CD4-positive, alpha-beta T cell (primary cell): ENCODE measurements at regions of chr22 and their contacts with region 1.

Region 1: DNA sequence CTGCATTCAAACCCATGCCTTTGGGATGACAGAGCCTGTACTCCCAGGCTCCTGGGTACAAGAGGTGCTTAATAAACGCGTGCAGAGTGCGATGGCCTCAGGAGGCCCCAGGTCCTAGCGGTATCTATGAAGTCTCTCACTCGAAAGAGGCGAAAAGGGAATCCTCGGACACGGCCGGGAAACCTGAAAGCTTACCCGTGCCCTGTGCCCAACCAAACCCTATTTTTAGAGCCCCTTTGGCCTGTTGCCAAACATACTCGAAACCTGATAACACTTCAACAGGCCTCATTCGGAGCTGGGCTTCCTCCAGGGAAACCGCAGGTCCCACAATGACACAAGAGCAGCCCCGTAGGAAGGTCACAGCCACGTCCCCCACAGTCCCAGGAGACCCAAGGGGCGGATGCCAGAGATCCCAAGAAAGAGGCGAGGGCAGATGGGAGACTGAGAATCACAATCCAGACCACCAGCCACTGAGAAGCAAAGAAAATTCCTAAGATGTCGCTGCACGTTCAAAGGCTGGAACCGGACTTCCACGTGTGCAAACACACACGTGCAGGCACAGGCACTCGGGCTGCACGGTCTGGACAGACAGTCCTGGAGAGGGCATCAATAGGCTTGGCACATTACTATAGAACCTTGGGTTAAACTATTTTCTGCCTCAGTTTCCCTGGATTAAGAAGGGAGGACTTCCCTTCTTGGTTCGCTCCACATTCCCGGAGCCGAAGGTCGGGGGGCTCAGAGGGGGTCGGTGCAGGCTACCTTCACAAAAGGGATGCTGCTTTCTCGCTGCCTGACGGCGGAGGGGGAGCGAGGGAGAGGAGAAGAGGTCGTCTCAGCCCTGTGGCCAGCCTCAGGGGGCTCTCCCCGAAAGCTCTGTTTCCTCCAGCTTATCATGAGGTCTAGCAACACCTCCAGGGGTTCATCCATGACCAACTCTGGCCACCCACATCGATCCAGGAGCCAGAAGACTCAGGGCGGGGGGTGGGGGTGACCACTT is 8.2 kb downstream of the PDGFB start:
- DNase-seq: peak in 11 of 14 experiments; percentile 25 to 82 (median 38)
- ATAC-seq: peak; percentile 9
- H3K4me3 ChIP-seq: peak overlapping the region; percentile 12
- H3K4me3 Mint-ChIP-seq: peak overlapping the region; percentile 83
- H3K27ac ChIP-seq: no peak overlapping the region
- H3K27ac Mint-ChIP-seq: peak overlapping the region; percentile 6
- H3K4me1 ChIP-seq: peaks cover 80% of the 10 kb centered on the region
- H3K4me1 Mint-ChIP-seq: peaks cover 76% of the 10 kb centered on the region
- H3K27me3 ChIP-seq: peaks cover 24 to 28% of the 10 kb centered on the region in 2 experiments
- H3K27me3 Mint-ChIP-seq: peaks cover 37% of the 10 kb centered on the region
- CTCF ChIP-seq: no peak

Region 2: GRCh38 chr22:39152511-39153219 is 84.0 kb before region 1 on chr22 and contains the start of gene CBX7:
- CTCF ChIA-PET with region 1: no interaction called
- POLR2A ChIA-PET with region 1: interaction called, 20 read pairs
- intact Hi-C with region 1: loop called in 1 of 2 experiments (anchors 5 kb)
- DNase-seq: peak; percentile 84 to 98 (median 94)
- ATAC-seq: peak; percentile 83
- H3K4me3 ChIP-seq: peak within 1 kb of the TSS; percentile 94
- H3K4me3 Mint-ChIP-seq: peak within 1 kb of the TSS; percentile 94
- H3K27ac ChIP-seq: peak within 1 kb of the TSS; percentile 83 to 86
- H3K27ac Mint-ChIP-seq: peak within 1 kb of the TSS; percentile 100
- H3K4me1 ChIP-seq: peaks cover 54% of the 10 kb centered on the region
- H3K4me1 Mint-ChIP-seq: peaks cover 39% of the 10 kb centered on the region
- H3K27me3 ChIP-seq: no peaks in the 10 kb centered on the region
- H3K27me3 Mint-ChIP-seq: no peaks in the 10 kb centered on the region
- CTCF ChIP-seq: no peak
- total RNA-seq, gene CBX7: 48.6 to 49.1 TPM

Region 3: GRCh38 chr22:39170825-39171622 is 65.6 kb before region 1 on chr22:
- CTCF ChIA-PET with region 1: interaction called, 6 read pairs
- POLR2A ChIA-PET with region 1: interaction called, 24 read pairs
- intact Hi-C with region 1: loop called (anchors 2 to 5 kb)
- DNase-seq: peak; percentile 63 to 90 (median 84)
- ATAC-seq: peak; percentile 74
- H3K4me3 ChIP-seq: peak overlapping the region; percentile 41
- H3K4me3 Mint-ChIP-seq: peak overlapping the region; percentile 69
- H3K27ac ChIP-seq: peak overlapping the region in 1 of 2 donors; percentile 58
- H3K27ac Mint-ChIP-seq: peak overlapping the region; percentile 97
- H3K4me1 ChIP-seq: peaks cover 58% of the 10 kb centered on the region
- H3K4me1 Mint-ChIP-seq: peaks cover 47% of the 10 kb centered on the region
- H3K27me3 ChIP-seq: no peaks in the 10 kb centered on the region
- H3K27me3 Mint-ChIP-seq: no peaks in the 10 kb centered on the region
- CTCF ChIP-seq: peak; percentile 99

Region 4: GRCh38 chr22:39502109-39502788 is 265.6 kb after region 1 on chr22 and contains the start of gene MIEF1:
- CTCF ChIA-PET with region 1: no interaction called
- POLR2A ChIA-PET with region 1: no interaction called
- intact Hi-C with region 1: loop called in 1 of 2 experiments (anchors 10 kb)
- DNase-seq: peak; percentile 70 to 96 (median 86)
- ATAC-seq: peak; percentile 94
- H3K4me3 ChIP-seq: peak within 1 kb of the TSS; percentile 67
- H3K4me3 Mint-ChIP-seq: peak within 1 kb of the TSS; percentile 99
- H3K27ac ChIP-seq: peak within 1 kb of the TSS; percentile 61 to 71
- H3K27ac Mint-ChIP-seq: peak within 1 kb of the TSS; percentile 92
- H3K4me1 ChIP-seq: peaks cover 39% of the 10 kb centered on the region
- H3K4me1 Mint-ChIP-seq: peaks cover 47% of the 10 kb centered on the region
- H3K27me3 ChIP-seq: no peaks in the 10 kb centered on the region
- H3K27me3 Mint-ChIP-seq: no peaks in the 10 kb centered on the region
- CTCF ChIP-seq: no peak
- total RNA-seq, gene MIEF1: 19.8 to 20.4 TPM